ENCODE measurements at regions of chr10 and their contacts with region 1.

Region 1: DNA sequence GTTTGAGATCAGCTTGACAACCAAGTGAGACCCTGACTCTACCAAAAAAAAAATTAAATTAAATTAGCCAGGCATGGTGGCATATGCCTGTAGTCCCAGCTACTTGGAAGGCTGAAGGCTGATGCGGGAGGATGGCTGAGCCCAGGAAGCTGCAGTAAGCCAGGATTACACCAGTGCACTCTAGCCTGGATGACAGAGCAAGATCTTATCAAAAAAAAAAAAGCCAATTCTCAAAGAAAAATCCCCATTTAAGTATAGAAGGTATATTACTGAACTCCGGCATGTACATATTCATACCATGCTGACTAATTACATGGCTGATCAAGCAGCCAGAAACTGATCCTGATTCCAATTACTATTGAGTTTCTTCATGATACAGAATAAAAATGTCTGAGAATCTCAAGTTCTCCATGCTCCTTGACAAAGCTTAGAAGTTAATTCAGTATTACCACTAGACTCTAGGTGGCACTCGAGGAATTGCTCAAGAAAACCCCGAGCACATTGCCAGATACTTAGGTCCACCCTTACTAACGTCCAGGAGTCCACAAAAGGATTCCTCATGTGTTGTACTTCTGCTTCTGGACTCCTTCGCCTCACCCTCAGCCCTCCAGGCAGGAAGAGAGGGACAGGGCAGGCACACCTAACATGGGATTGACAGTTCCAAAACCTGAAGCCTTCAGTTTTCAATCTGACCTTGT is 148.9 kb downstream of the PARD3 start:
- DNase-seq: peak; percentile 100
- ATAC-seq: peak; percentile 89
- H3K4me3 ChIP-seq: peak overlapping the region; percentile 19; the same call in 1 of the 2 replicates
- H3K27ac ChIP-seq: peak overlapping the region; percentile 62
- H3K4me1 ChIP-seq: peaks cover 22% of the 10 kb centered on the region
- H3K27me3 ChIP-seq: no peaks in the 10 kb centered on the region
- CTCF ChIP-seq: peak; percentile 100

Region 2: DNA sequence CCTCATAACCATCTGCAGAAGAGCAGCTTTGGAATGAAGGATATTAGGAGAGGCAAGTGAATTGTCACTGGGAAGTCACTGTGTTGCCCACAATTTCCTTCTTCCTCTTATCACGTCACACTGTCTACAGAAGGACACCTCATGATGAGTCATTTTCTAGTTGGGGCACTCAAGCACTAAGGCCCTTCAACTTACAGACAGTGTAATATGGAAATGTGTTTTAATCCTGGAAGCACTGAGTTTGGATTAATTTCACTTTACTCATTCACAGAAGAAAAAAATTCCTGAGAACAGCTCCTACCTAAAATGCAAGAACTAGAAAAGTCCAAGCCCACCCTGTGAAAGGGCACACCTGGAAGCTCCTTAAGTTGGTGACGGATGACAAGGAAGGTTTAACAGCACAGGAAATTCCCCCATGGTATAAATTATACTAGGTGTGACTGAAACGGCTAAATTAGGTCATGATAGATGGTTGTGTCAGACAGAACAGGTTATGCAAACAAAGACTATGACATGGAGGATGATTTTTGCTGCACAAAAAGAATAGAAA is 92.4 kb after region 1 on chr10:
- CTCF ChIA-PET with region 1: interaction called, 3 read pairs
- POLR2A ChIA-PET with region 1: no interaction called
- intact Hi-C with region 1: loop called (anchors 2 kb)
- DNase-seq: peak; percentile 100
- ATAC-seq: peak; percentile 91
- H3K4me3 ChIP-seq: peak overlapping the region; percentile 35
- H3K27ac ChIP-seq: peak overlapping the region; percentile 81
- H3K4me1 ChIP-seq: peaks cover 52% of the 10 kb centered on the region
- H3K27me3 ChIP-seq: no peaks in the 10 kb centered on the region
- CTCF ChIP-seq: no peak

Region 3: DNA sequence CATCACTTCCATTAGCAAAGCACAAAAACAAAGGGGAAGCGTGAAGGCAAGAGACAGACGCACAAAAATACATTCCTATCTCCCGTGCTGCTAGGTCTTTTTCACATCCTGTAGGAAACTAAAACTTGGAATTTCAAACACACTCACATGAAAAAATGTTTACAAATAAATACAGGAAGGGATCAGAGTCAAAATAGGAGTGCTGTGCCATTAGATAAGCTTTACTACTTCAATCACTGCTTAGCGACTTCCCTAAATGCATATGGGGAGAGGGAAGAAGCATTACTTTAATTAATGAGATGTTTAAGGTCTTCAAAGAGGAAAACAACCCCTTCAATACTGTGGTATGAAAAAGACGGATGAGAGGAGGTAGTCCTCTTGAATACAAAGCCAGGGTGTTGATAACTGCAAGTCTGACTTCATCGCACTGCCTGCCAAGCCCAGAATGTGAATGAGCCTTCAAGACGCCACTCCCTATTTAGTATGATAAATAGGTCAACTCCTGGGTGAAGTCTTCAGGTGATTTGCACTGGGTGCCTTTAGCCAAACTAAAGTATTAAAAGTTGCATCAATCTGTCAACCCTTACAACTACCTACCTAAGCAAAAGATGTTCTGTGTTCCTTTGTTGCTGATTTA is 135.1 kb after region 1 on chr10:
- CTCF ChIA-PET with region 1: no interaction called
- POLR2A ChIA-PET with region 1: no interaction called
- intact Hi-C with region 1: no loop called
- DNase-seq: no peak
- ATAC-seq: no peak
- H3K4me3 ChIP-seq: no peak overlapping the region
- H3K27ac ChIP-seq: no peak overlapping the region
- H3K4me1 ChIP-seq: peaks cover 11% of the 10 kb centered on the region
- H3K27me3 ChIP-seq: no peaks in the 10 kb centered on the region
- CTCF ChIP-seq: no peak

Region 4: GRCh38 chr10:34824870-34825269 is 158.7 kb after region 1 on chr10:
- CTCF ChIA-PET with region 1: interaction called, 3 read pairs
- POLR2A ChIA-PET with region 1: no interaction called
- intact Hi-C with region 1: loop called (anchors 2 kb)
- DNase-seq: peak; percentile 42
- ATAC-seq: peak; percentile 74
- H3K4me3 ChIP-seq: no peak overlapping the region
- H3K27ac ChIP-seq: no peak overlapping the region
- H3K4me1 ChIP-seq: peaks cover 7% of the 10 kb centered on the region
- H3K27me3 ChIP-seq: no peaks in the 10 kb centered on the region
- CTCF ChIP-seq: peak; percentile 74

Region 5: GRCh38 chr10:34960983-34961382 is 294.8 kb after region 1 on chr10:
- CTCF ChIA-PET with region 1: interaction called, 4 read pairs
- POLR2A ChIA-PET with region 1: no interaction called
- intact Hi-C with region 1: loop called (anchors 1 kb)
- DNase-seq: peak; percentile 66
- ATAC-seq: peak; percentile 83
- H3K4me3 ChIP-seq: no peak overlapping the region
- H3K27ac ChIP-seq: no peak overlapping the region
- H3K4me1 ChIP-seq: 0 out of 2 replicates have a peak, but pooled peaks cover 3% of the 10 kb centered on the region
- H3K27me3 ChIP-seq: no peaks in the 10 kb centered on the region
- CTCF ChIP-seq: peak; percentile 79

Region 6: DNA sequence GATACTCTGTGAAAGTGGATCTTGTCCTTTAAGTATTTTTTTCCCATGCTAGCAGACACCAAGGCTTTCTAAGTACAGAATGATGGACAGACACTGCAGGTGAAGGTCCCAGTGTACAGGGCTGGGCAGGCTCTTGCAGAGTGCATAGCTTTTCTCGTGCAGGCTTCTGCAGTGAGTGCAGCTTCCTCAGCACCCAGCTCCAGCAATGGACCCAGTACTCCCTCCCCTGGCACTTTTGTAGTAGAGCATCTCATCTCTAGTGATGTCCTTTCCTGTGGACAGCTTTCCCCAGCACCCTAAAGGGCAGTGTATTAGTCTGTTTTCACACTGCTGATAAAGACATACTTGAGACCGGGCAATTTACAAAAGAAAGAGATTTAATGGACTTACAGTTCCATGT is 319.7 kb after region 1 on chr10:
- CTCF ChIA-PET with region 1: interaction called, 10 read pairs
- POLR2A ChIA-PET with region 1: no interaction called
- intact Hi-C with region 1: loop called (anchors 1 kb)
- DNase-seq: peak; percentile 87
- ATAC-seq: peak; percentile 96
- H3K4me3 ChIP-seq: no peak overlapping the region
- H3K27ac ChIP-seq: no peak overlapping the region
- H3K4me1 ChIP-seq: no peaks in the 10 kb centered on the region
- H3K27me3 ChIP-seq: no peaks in the 10 kb centered on the region
- CTCF ChIP-seq: peak; percentile 93

Region 7: DNA sequence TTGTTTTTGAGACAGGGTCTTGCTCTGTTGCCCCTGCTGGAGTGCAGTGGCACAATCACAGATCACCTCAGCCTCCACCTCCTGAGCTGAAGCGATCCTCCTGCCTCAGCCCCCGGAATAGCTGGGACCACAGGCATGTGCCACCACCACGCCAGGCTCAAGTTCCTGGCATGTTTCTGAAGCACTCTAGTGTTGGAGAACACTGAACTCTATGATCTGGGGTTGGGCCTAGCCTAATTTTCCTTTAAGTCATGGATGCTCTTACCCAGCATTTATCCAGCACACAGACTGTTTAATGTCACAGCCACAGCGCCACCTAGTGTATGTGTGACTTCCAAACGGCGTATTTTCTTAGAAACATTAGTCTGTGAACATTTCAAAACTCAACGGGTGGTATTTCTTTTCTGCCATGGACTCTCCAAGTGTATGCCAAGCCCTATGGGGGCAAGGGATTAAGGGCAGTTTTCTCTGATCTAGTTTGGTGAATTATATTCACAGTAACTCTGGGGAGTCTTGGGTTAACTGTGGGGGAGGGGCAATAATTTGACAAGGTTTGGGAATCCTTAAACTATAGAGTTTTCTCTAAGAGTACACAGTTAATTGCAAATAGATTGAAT is 552.3 kb after region 1 on chr10:
- CTCF ChIA-PET with region 1: interaction called, 3 read pairs
- POLR2A ChIA-PET with region 1: no interaction called
- intact Hi-C with region 1: loop called (anchors 5 kb)
- DNase-seq: peak; percentile 100
- ATAC-seq: peak; percentile 86
- H3K4me3 ChIP-seq: peak overlapping the region; percentile 5; the same call in 1 of the 2 replicates
- H3K27ac ChIP-seq: no peak overlapping the region
- H3K4me1 ChIP-seq: no peaks in the 10 kb centered on the region
- H3K27me3 ChIP-seq: no peaks in the 10 kb centered on the region
- CTCF ChIP-seq: peak; percentile 100